Astrocyte of the cerebellum (primary cell): ENCODE measurements at regions of chr11 and their contacts with region 1.

Region 1: GRCh38 chr11:129992161-129992944 is 10.3 kb downstream of the PRDM10 start:
- DNase-seq: no peak
- H3K4me3 ChIP-seq: no peak overlapping the region
- CTCF ChIP-seq: peak; percentile 33

Region 2: GRCh38 chr11:129639300-129639699 is 353.1 kb before region 1 on chr11:
- in situ Hi-C with region 1: no loop called
- DNase-seq: peak; percentile 84
- H3K4me3 ChIP-seq: no peak overlapping the region
- CTCF ChIP-seq: no peak

Region 3: DNA sequence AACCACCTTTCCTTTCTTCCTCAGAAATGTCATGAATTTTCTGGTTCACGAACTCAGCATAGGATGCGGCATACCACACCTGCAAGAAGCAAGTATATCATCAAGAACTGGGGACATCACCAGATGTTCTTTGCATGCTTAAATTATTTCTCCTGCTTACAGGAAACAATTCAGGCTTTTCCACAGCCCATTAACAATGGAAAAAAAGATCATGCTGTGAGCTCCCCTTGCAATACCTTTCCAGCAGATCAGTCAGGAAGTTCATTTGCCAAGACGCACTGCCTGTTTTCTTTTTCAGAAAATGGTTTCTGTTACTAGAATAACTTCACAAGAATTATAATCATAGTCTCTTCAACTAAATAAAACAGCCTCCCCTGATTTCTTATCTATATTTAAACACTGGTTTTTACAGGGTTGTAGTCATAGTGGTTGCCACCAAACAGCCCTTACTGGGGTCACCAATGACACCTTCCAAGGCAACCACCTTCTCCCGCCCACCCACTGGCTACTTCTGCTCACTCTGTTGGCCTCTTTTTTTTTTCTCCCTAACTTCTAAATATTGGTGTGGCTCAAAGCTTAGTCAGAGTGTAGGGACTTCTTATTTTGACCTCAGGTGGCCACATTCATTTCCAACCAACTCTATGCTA is 54.6 kb before region 1 on chr11:
- in situ Hi-C with region 1: no loop called
- DNase-seq: peak; percentile 23
- H3K4me3 ChIP-seq: no peak overlapping the region
- CTCF ChIP-seq: no peak

Region 4: DNA sequence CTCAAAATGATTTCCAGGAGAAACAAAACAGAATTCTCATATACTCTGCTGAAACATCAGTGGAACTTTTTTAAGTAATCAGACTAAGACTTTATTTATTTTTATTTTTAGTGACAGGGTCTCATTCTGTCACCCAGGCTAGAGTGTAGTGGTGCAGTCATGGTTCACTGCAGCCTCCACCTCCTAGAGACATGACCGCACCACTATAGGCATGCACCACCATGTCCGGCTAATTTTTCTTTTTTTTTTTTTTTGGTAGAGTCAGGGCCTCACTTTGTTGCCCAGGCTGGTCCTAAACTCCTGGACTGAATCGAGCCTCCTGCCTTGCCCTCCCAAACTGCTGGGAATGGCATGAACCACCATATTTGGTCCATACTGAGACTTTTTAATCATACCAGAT is 32.7 kb before region 1 on chr11:
- in situ Hi-C with region 1: loop called (anchors 5 kb)
- DNase-seq: no peak
- H3K4me3 ChIP-seq: no peak overlapping the region
- CTCF ChIP-seq: no peak